ENCODE measurements at regions of chr10 and their contacts with region 1.

Region 1: DNA sequence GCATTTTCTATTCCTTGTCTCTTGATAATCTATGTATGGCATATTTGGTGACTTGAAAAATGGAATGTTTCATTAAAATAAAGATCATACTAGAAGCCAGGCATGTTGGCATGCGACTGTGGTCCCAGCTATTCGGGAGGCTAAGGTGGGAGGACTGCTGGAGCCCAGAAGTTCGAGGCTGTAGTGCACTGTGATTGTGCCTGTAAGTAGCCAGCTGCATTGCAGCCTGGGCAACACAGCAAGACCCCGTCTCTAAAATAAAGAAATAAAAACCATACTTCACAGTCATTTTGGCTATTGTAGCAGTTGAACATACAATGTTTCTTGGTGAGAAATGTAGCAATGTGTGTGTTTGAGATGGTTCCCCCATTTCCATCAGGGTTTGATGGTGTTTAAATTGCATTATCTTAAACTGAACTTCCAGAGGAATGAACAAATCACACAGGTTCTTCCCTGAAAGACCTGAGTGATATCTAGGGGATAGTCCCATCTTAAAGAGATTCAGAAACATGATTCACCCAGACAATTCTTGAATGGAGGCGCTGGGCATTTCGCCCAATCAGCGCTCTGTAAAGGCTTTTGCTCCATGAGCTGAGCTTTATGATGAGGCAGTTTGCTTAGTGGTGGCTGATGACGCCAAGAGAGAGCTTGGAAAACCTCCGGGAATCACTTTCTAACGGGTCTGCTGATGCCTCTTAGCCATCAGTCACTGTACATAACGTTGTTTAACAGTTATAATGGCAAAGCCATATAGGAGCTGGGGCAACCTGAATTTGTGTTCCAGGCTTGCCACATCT is 19.4 kb upstream of the BTBD16 start:
- DNase-seq: no peak
- ATAC-seq: no peak
- H3K4me3 ChIP-seq: no peak overlapping the region
- H3K27ac ChIP-seq: no peak overlapping the region
- H3K4me1 ChIP-seq: no peaks in the 10 kb centered on the region
- H3K27me3 ChIP-seq: no peaks in the 10 kb centered on the region
- CTCF ChIP-seq: no peak

Region 2: DNA sequence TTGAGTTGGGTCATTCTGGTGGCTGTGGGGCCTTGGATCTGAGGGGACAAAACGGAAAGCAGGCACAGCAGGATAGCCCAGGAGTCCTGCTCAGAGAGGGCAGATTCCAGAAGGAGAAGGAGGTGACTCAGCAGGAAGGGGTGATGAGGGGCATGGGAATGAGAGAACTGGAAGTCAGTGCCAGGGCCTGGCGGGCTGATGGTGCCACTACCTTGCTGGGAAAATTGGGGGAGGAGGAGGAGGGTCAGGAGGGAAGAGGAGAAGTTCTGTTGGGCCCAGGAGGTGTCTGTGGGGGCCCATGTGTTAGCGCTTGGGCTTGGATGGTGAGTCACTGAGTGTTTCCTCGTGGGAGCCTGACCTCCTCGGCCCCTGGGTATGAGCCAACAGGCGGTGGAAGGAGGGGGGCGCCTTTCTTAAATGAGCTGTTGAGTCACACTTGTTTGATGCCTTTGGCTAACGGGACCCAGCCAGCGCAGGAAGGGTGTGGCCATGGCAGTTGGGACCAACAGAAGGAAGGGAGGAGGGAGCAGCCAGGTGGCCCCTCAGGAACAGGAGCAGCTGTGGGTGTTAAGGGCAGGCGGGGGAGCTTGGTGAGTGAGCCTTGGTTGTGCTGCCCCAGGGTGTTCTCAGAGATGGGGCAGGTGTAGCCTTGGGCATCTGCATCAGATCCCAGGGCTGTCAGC is 110.6 kb before region 1 on chr10:
- CTCF ChIA-PET with region 1: interaction called, 14 read pairs
- POLR2A ChIA-PET with region 1: no interaction called
- in situ Hi-C with region 1: no loop called
- intact Hi-C with region 1: no loop called
- DNase-seq: peak; percentile 89
- ATAC-seq: peak; percentile 86
- H3K4me3 ChIP-seq: peak overlapping the region in 1 of 2 experiments; percentile 41; a peak in 2 of 4 replicates
- H3K27ac ChIP-seq: peak overlapping the region; percentile 93
- H3K4me1 ChIP-seq: peaks cover 63% of the 10 kb centered on the region
- H3K27me3 ChIP-seq: no peaks in the 10 kb centered on the region
- CTCF ChIP-seq: no peak

Measured in Panc1 (cell line).